A549 (cell line): ENCODE measurements at regions of chr15 and their contacts with region 1.

Region 1: DNA sequence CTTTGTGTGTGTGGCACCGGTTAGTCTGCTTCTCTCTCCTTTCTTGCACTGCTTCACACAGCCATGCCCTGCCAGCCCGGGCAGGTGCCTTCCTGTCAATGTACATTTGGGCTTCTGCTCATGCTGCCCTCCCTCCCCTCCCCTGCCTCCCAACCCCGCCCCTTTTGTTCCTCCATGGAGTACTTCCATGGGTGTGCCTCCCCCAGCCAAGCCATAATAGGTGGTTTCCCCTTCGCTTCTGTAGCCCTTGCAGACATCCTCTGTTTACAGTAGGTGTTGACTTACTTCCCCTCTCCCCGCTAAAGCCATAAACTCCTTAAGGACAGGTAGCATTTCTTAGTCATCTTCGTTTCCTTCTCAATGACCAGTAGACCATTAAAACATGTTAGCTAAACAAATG is 31.8 kb upstream of the CRTC3 start:
- DNase-seq: no peak
- ATAC-seq: no peak; a peak in 1 of 6 replicates
- H3K4me3 ChIP-seq: no peak overlapping the region
- H3K27ac ChIP-seq: no peak overlapping the region
- H3K4me1 ChIP-seq: no peaks in the 10 kb centered on the region
- CTCF ChIP-seq: no peak
- EP300 ChIP-seq: no peak
- POLR2A ChIP-seq: no peak
- RAD21 ChIP-seq: no peak

Region 2: DNA sequence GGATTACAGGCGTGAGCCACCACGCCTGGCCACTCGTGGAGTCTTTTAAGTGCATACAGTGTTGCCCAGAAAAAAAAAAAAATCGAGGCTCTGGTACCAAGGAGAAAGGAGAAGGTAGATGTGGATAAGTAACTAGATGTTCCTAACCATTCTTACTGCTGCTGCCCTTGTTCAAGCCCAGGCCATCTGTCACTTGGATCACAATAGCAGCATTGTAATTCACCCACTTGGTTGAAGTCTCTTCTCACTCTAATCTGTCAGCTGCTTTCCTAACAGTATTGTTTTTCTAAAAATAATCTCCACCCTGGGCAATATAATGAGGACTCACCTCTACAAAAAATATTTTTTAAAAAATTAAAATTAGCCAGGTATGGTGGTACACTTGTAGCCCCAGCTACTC is 26.1 kb before region 1 on chr15:
- CTCF ChIA-PET with region 1: no interaction called
- POLR2A ChIA-PET with region 1: no interaction called
- DNase-seq: no peak
- ATAC-seq: no peak
- H3K4me3 ChIP-seq: no peak overlapping the region
- H3K27ac ChIP-seq: no peak overlapping the region
- H3K4me1 ChIP-seq: no peaks in the 10 kb centered on the region
- CTCF ChIP-seq: no peak
- EP300 ChIP-seq: no peak
- POLR2A ChIP-seq: no peak
- RAD21 ChIP-seq: no peak

Region 3: GRCh38 chr15:90512981-90513380 is 15.1 kb after region 1 on chr15:
- CTCF ChIA-PET with region 1: interaction called, 22 read pairs
- POLR2A ChIA-PET with region 1: no interaction called
- DNase-seq: no peak
- ATAC-seq: peak in 1 of 2 experiments; percentile 40; a peak in 2 of 6 replicates
- H3K4me3 ChIP-seq: no peak overlapping the region
- H3K27ac ChIP-seq: no peak overlapping the region
- H3K4me1 ChIP-seq: peaks cover 6% of the 10 kb centered on the region
- CTCF ChIP-seq: no peak
- EP300 ChIP-seq: no peak
- POLR2A ChIP-seq: no peak
- RAD21 ChIP-seq: no peak